ENCODE measurements at regions of chr10 and their contacts with region 1.

Region 1: GRCh38 chr10:22316285-22317120 is at the start of gene COMMD3:
- DNase-seq: peak; percentile 86
- H3K4me3 Mint-ChIP-seq: peak within 1 kb of the TSS; percentile 85
- H3K27ac Mint-ChIP-seq: peak within 1 kb of the TSS; percentile 84
- H3K4me1 Mint-ChIP-seq: peaks cover 16% of the 10 kb centered on the region
- H3K27me3 Mint-ChIP-seq: no peaks in the 10 kb centered on the region
- CTCF ChIP-seq: no peak
- total RNA-seq, gene COMMD3: 69.4 and 73.4 TPM in 2 replicates

Region 2: GRCh38 chr10:22010973-22011408 is 305.5 kb before region 1 on chr10:
- CTCF ChIA-PET with region 1: interaction called, 4 read pairs
- POLR2A ChIA-PET with region 1: interaction called, 89 read pairs
- intact Hi-C with region 1: no loop called
- DNase-seq: peak; percentile 31
- H3K4me3 Mint-ChIP-seq: no peak overlapping the region
- H3K27ac Mint-ChIP-seq: no peak overlapping the region
- H3K4me1 Mint-ChIP-seq: no peaks in the 10 kb centered on the region
- H3K27me3 Mint-ChIP-seq: no peaks in the 10 kb centered on the region
- CTCF ChIP-seq: peak; percentile 25

Region 3: GRCh38 chr10:22086730-22087389 is 229.6 kb before region 1 on chr10:
- CTCF ChIA-PET with region 1: no interaction called
- POLR2A ChIA-PET with region 1: interaction called, 17 read pairs
- intact Hi-C with region 1: no loop called
- DNase-seq: peak; percentile 87
- H3K4me3 Mint-ChIP-seq: peak overlapping the region; percentile 48
- H3K27ac Mint-ChIP-seq: peak overlapping the region; percentile 90
- H3K4me1 Mint-ChIP-seq: peaks cover 26% of the 10 kb centered on the region
- H3K27me3 Mint-ChIP-seq: no peaks in the 10 kb centered on the region
- CTCF ChIP-seq: no peak

Region 4: DNA sequence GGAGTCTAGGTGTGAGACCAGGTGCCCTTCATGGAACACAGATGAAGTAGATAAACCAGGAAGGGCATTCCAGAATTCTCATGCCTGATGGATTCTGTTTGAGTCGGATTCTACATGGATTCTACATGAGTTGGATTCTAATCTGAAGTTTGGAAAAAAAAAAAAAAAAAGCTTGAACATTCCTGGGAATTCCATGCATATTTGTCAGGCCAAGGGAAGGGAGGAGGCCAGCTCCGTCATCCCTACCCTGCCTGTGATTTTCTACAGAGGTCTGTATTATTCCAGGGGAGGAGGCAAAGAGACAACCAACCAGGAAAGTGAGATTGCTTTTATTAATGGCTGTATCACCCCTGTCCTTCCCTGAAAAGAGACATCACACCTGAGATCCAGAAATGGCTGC is 70.9 kb before region 1 on chr10:
- CTCF ChIA-PET with region 1: no interaction called
- POLR2A ChIA-PET with region 1: interaction called, 16 read pairs
- intact Hi-C with region 1: loop called (anchors 1 kb)
- DNase-seq: no peak
- H3K4me3 Mint-ChIP-seq: no peak overlapping the region
- H3K27ac Mint-ChIP-seq: no peak overlapping the region
- H3K4me1 Mint-ChIP-seq: peaks cover 22% of the 10 kb centered on the region
- H3K27me3 Mint-ChIP-seq: no peaks in the 10 kb centered on the region
- CTCF ChIP-seq: no peak

Region 5: GRCh38 chr10:22251751-22252223 is 64.7 kb before region 1 on chr10:
- CTCF ChIA-PET with region 1: no interaction called
- POLR2A ChIA-PET with region 1: interaction called, 16 read pairs
- intact Hi-C with region 1: loop called (anchors 1 kb)
- DNase-seq: peak; percentile 55
- H3K4me3 Mint-ChIP-seq: peak overlapping the region; percentile 74
- H3K27ac Mint-ChIP-seq: peak overlapping the region; percentile 95
- H3K4me1 Mint-ChIP-seq: peaks cover 18% of the 10 kb centered on the region
- H3K27me3 Mint-ChIP-seq: no peaks in the 10 kb centered on the region
- CTCF ChIP-seq: no peak

Region 6: DNA sequence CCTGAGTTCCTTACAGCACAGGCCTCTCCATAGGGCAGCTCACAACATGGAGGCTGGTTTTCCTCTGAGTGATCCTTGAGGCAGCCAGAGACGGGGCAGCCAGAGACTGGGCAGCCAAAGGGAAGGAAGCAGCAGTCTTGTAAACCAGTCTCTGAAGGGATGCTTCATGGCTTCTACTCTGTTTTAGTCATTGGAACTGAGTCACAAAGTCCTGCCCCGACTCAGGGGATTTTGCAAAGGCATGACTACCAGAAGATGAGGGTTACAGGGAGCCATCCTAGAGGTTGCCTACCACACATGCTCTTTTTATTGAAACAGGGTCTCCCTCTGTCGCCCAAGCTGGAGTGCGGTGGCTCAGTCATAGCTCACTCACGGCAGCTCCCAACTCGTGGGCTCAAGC is 44.7 kb before region 1 on chr10:
- CTCF ChIA-PET with region 1: no interaction called
- POLR2A ChIA-PET with region 1: no interaction called
- intact Hi-C with region 1: no loop called
- DNase-seq: no peak
- H3K4me3 Mint-ChIP-seq: no peak overlapping the region
- H3K27ac Mint-ChIP-seq: no peak overlapping the region
- H3K4me1 Mint-ChIP-seq: no peaks in the 10 kb centered on the region
- H3K27me3 Mint-ChIP-seq: no peaks in the 10 kb centered on the region
- CTCF ChIP-seq: no peak

Region 7: DNA sequence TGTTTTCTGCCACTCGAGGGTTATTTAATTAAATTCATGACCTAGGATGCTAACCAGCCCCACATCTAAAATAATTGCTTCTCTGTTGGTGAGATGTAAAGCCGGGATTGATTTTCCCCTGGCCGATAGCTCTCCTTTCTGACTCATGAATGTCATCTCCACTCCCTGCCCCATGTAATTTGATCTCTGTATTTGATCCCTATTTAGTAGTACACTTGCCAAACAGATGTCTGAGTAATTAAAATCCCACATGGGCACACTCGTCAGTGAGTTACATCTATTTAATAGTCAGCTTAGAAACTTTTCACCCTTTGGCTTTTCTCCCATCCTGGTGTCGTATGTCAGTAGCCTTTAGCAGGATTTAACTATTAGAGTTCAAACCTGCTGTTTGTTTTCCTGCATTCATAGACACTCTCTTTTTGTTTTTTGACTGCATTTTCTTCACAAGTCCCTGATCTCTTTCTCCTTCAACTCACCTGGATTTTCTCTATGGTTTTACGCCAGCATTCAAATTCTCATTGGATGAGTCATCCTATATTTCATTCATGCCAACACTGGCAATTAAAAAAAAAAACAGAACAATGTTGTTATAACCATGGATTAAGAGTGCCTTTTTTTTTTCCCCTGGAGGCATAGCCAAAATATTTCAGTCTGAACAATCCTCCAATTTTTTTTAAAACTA is 111.5 kb after region 1 on chr10:
- CTCF ChIA-PET with region 1: no interaction called
- POLR2A ChIA-PET with region 1: interaction called, 6 read pairs
- intact Hi-C with region 1: loop called (anchors 5 kb)
- DNase-seq: peak; percentile 93
- H3K4me3 Mint-ChIP-seq: peak overlapping the region; percentile 49
- H3K27ac Mint-ChIP-seq: peak overlapping the region; percentile 63
- H3K4me1 Mint-ChIP-seq: peaks cover 41% of the 10 kb centered on the region
- H3K27me3 Mint-ChIP-seq: no peaks in the 10 kb centered on the region
- CTCF ChIP-seq: no peak

Measured in MCF 10A (cell line).